ENCODE measurements at regions of chr11 and their contacts with region 1.

Region 1: DNA sequence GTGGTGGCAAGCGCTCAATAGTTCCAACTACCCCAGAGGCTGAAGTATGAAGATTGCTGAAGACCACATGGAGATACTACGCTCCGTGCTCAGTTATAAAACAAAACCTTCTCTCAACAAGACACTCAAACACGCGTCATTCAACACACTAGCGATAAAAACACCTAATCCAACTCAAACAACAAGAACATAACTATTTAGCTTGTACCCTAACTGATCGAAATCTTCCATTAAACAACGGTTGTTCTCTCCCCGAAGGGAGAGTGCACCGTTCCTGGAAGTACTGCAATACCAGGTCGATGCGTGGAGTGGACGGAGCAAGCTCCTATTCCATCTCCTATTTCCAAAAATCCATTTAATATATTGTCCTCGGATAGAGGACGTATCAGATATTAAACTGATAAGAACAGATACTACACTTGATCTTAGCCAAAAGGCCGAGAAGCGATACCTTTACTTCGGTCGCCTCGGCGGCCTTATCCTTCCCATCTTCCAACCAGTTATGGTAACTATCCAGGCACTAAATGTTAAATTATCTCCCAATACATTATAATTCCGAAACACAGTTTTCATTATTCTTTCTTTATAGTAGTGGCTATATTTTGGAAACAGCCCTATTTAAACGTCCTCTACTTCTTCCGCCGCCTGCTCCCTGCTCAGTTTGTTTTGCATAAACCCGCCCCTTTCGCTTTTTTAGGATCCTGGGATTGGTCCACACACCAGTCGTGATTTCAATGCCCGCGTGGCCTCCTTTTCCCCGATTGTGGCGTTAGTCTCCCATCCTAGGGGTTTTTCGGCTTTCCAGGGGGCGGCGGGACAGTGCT is 2.2 kb upstream of the WDR74 start:
- DNase-seq: peak; percentile 99
- H3K4me3 ChIP-seq: peak overlapping the region; percentile 50
- H3K27ac ChIP-seq: peak overlapping the region; percentile 97
- H3K27me3 ChIP-seq: no peaks in the 10 kb centered on the region
- CTCF ChIP-seq: no peak

Region 2: DNA sequence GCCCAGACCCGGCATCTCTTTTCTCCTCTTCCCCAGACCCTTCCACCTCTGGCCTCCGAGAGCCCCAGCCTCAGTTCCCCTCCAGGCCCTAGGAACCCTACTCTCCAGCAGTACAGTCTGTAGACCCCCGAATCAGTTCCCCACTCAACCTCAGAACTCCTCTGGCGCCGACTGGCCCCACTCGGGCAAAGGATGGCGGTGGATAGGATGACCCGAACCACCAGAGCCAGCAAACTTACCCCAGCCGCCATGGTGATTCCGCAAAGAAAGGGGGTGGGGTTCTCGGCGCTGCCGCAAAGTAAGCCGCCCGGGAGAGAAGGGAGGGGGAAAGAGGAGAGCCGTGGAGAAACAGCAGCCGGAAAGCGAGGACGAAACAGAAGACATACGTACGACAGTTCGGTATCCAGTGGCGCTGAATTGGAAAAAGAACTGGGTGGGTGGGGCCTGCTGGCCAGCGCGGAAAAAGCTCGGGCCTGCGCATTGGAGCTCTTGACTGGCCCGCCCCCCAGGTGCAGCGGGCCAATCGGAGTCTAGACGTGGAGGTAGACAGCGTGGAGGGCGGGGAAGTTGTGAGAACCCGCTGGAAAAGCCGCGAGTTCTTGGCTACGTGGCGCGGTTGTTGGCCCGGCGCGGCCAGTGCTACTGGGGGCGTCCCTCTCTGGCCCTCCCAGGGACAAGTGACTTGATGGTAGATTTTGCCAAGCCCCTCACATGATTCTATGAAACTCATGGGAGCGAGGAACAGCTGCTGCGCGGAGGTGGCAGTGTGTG is 267.8 kb before region 1 on chr11 and contains the start of gene EEF1G:
- CTCF ChIA-PET with region 1: no interaction called
- POLR2A ChIA-PET with region 1: interaction called, 17 read pairs
- DNase-seq: peak; percentile 100
- H3K4me3 ChIP-seq: peak within 1 kb of the TSS; percentile 92
- H3K27ac ChIP-seq: peak within 1 kb of the TSS; percentile 98
- H3K27me3 ChIP-seq: no peaks in the 10 kb centered on the region
- CTCF ChIP-seq: no peak
- polyA plus RNA-seq, gene EEF1G: 2,186 and 2,474 TPM in 2 replicates

Region 3: GRCh38 chr11:62671575-62672389 is 169.8 kb before region 1 on chr11 and contains the starts of genes LBHD1 and UQCC3:
- CTCF ChIA-PET with region 1: no interaction called
- POLR2A ChIA-PET with region 1: interaction called, 12 read pairs
- DNase-seq: peak; percentile 65
- H3K4me3 ChIP-seq: peak within 1 kb of the TSS; percentile 84
- H3K27ac ChIP-seq: peak within 1 kb of the TSS; percentile 81
- H3K27me3 ChIP-seq: no peaks in the 10 kb centered on the region
- CTCF ChIP-seq: no peak
- polyA plus RNA-seq, gene LBHD1: 2.4 and 3.2 TPM in 2 replicates
- polyA plus RNA-seq, gene UQCC3: 5.4 and 6.2 TPM in 2 replicates

Region 4: DNA sequence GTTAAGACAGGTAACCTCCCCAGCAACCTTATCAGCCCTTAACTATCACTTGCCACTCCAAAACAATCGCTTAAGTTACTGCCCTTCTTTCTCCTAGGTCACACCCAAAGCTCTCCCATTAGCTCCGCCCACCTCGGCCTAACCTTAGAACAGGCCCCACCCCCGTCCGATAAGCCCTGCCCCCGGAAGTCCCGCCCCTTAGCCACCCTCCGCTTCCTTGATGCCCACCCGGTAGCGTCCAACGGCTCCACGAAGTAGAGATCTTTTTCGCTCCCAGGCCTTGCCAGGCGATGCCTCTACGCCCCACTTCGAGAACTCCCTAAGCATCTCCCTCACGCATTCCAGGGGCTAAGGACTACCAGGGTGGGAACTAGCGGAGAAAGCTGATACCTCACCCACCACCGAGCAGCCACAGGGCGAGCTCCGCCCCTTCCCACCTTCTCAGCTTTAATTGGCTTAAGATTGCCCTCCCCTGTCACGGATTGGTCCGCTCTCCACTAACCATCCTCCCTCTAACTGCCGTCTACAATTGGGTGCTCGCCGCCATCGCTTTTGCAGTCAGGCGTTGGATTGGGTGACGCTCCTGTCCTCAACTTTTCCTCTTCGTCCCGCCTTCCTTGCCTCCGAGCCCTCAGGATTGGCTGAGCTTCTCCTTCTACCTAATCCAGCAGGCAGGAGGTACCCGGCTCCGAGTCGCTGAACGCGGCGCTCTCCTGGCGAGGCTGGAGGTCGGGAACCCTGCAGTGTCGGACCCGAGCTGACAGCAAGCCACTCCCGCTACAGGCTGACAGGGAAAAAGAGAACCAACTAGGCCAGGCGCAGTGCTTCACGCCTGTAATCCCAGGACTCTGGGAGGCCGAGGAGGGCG is 87.6 kb before region 1 on chr11 and contains the start of gene ZBTB3:
- CTCF ChIA-PET with region 1: no interaction called
- POLR2A ChIA-PET with region 1: interaction called, 31 read pairs
- DNase-seq: peak; percentile 97
- H3K4me3 ChIP-seq: peak within 1 kb of the TSS; percentile 94
- H3K27ac ChIP-seq: peak within 1 kb of the TSS; percentile 80
- H3K27me3 ChIP-seq: no peaks in the 10 kb centered on the region
- CTCF ChIP-seq: no peak
- polyA plus RNA-seq, gene ZBTB3: 3.2 and 3.7 TPM in 2 replicates

Region 5: GRCh38 chr11:62805076-62805892 is 36.3 kb before region 1 on chr11 and contains the start of gene NXF1:
- CTCF ChIA-PET with region 1: no interaction called
- POLR2A ChIA-PET with region 1: interaction called, 28 read pairs
- DNase-seq: peak; percentile 87
- H3K4me3 ChIP-seq: peak within 1 kb of the TSS; percentile 96
- H3K27ac ChIP-seq: peak within 1 kb of the TSS; percentile 81
- H3K27me3 ChIP-seq: no peaks in the 10 kb centered on the region
- CTCF ChIP-seq: peak; percentile 14; the same call in 1 of the 2 replicates
- polyA plus RNA-seq, gene NXF1: 48.9 and 66.1 TPM in 2 replicates

Region 6: DNA sequence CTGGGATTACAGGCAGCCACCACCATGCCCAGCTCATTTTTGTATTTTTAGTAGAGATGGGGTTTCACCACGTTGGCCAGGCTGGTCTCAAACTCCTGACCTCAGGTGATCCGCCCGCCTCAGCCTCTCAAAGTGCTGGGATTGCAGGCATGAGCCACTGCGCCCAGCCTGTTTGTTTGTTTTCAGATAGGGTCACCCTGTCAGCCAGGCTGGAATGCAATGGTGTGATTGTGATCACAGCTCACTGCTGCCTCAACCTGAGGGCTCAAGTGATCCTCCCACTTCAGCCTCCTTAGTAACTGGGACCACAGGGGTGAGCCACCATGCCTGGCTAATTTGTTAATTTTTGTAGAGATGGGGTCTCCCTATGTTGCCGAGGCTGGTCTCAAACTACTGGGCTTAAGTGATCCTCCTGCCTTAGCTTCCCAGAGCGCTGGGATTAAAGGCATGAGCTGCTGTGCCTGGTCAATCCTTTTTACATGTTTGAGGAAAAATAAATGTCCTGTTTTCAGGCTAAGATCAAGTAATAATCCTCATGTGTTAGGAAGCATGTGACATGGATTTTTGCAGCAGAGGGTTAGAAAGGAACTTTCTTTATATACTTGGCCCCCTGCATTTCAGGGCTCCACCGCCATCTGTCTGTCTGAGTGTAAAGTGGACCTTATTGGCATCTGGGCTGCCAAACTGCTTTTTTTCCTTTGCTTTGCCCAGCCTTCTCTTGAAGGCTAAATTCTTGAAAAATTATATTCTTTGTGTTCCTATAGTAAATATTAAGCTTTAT is 34.3 kb after region 1 on chr11:
- CTCF ChIA-PET with region 1: no interaction called
- POLR2A ChIA-PET with region 1: interaction called, 68 read pairs
- DNase-seq: no peak
- H3K4me3 ChIP-seq: no peak overlapping the region
- H3K27ac ChIP-seq: peak overlapping the region; percentile 11
- H3K27me3 ChIP-seq: no peaks in the 10 kb centered on the region
- CTCF ChIP-seq: 0 out of 2 replicates have a peak, but pooled peaks have one; percentile 7

Measured in AG04450 (cell line).